Psoas muscle (tissue), 8 donors: ENCODE measurements at regions of chr5 and their contacts with region 1.

Region 1: GRCh38 chr5:139232147-139232724 is 34.1 kb upstream of the SIL1 start:
- DNase-seq: no peak
- ATAC-seq: no peak
- H3K4me3 ChIP-seq: no peak overlapping the region
- H3K27ac ChIP-seq: no peak overlapping the region
- H3K4me1 ChIP-seq: no peaks in the 10 kb centered on the region
- H3K27me3 ChIP-seq: no peaks in the 10 kb centered on the region
- CTCF ChIP-seq: no peak

Region 2: DNA sequence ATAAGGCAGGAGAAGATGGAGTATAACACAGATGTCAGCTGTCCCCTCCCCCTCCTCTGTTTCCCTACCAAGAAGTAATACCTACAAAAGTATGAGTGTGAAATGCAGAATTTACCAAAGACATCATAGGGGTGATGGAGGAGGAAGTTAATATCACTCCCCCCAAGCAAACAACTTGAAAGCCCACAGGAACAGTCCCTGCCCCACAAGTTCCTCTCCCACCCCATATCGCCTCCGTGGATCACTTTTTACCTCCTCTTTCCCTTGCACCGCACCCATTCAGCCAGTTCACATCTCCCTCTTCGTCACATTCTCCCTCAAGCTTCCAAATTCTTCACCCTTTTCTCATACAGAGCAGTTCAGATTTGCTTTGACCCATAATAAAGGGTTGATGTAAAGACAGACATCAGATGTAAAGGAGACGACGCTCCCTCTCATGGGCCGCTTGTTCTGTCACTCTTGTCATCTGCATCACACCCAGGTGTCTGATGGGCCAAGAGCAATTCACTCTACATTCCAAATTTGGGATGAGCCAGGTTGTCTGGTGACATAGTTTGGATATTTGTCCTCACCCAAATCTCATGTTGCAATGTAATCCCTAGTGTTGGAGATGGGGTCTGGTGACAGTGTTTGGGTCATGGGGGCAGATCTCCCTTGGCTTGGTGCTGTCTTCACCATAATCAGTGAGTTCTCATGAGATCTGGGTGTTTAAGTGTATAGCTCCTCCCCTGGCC is 26.9 kb before region 1 on chr5:
- intact Hi-C with region 1: loop called in 1 of 2 experiments (anchors 1 kb)
- DNase-seq: no peak
- ATAC-seq: no peak
- H3K4me3 ChIP-seq: no peak overlapping the region
- H3K27ac ChIP-seq: no peak overlapping the region
- H3K4me1 ChIP-seq: no peaks in the 10 kb centered on the region
- H3K27me3 ChIP-seq: no peaks in the 10 kb centered on the region
- CTCF ChIP-seq: no peak